ENCODE measurements at regions of chr5 and their contacts with region 1.

Region 1: DNA sequence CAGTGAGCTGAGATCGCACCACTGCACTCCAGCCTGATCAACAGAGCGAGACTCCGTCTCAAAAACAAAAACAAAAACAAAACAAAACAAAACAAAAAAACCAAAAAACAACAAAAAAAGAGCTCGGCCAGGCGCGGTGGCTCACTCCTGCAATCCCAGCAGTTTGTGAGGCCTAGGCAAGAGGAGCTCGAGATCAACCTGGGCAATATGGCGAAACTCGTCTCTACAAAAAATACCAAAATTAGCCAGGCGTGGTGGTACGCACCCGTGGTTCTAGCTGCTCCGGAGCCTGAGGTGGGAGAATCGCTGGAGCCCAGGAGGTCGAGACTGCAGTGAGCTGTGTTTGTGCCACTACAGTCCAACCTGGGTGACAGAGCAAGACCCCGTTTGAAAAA is 20.1 kb downstream of the TRIM7 start:
- H3K4me3 ChIP-seq: no peak overlapping the region
- H3K27ac ChIP-seq: no peak overlapping the region; the same call in 1 of the 2 replicates
- H3K4me1 ChIP-seq: no peaks in the 10 kb centered on the region
- CTCF ChIP-seq: no peak

Region 2: DNA sequence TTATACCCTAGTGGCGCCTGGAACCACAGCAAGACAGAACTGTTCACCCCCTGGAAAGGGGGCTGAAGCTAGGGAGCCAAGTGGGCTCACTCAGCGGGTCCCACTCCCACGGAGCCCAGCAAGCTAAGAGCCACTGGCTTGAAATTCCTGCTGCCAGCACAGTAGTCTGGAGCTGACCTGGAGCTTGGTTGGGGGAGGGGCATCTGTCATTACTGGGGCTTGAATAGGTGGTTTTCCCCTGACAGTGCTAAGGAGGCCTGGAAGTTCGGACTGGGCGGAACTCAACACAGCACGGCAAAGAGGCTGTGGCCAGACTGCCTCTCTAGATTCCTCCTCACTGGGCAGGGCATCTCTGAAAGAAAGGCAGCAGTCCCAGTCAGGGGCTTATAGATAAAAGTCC is 176.7 kb before region 1 on chr5:
- CTCF ChIA-PET with region 1: no interaction called
- POLR2A ChIA-PET with region 1: no interaction called
- H3K4me3 ChIP-seq: no peak overlapping the region
- H3K27ac ChIP-seq: no peak overlapping the region
- H3K4me1 ChIP-seq: no peaks in the 10 kb centered on the region
- CTCF ChIP-seq: no peak

Region 3: GRCh38 chr5:181167814-181168488 is 16.9 kb before region 1 on chr5:
- CTCF ChIA-PET with region 1: interaction called, 27 read pairs
- POLR2A ChIA-PET with region 1: interaction called, 6 read pairs
- H3K4me3 ChIP-seq: no peak overlapping the region
- H3K27ac ChIP-seq: no peak overlapping the region
- H3K4me1 ChIP-seq: peaks cover 6% of the 10 kb centered on the region
- CTCF ChIP-seq: peak; percentile 63

Region 4: GRCh38 chr5:181173420-181174342 is 11.2 kb before region 1 on chr5:
- CTCF ChIA-PET with region 1: interaction called, 27 read pairs
- POLR2A ChIA-PET with region 1: interaction called, 6 read pairs
- H3K4me3 ChIP-seq: peak overlapping the region; percentile 40
- H3K27ac ChIP-seq: peak overlapping the region; percentile 67
- H3K4me1 ChIP-seq: peaks cover 6% of the 10 kb centered on the region; the same call in 1 of the 2 replicates
- CTCF ChIP-seq: peak; percentile 43; the same call in 1 of the 2 replicates

Region 5: DNA sequence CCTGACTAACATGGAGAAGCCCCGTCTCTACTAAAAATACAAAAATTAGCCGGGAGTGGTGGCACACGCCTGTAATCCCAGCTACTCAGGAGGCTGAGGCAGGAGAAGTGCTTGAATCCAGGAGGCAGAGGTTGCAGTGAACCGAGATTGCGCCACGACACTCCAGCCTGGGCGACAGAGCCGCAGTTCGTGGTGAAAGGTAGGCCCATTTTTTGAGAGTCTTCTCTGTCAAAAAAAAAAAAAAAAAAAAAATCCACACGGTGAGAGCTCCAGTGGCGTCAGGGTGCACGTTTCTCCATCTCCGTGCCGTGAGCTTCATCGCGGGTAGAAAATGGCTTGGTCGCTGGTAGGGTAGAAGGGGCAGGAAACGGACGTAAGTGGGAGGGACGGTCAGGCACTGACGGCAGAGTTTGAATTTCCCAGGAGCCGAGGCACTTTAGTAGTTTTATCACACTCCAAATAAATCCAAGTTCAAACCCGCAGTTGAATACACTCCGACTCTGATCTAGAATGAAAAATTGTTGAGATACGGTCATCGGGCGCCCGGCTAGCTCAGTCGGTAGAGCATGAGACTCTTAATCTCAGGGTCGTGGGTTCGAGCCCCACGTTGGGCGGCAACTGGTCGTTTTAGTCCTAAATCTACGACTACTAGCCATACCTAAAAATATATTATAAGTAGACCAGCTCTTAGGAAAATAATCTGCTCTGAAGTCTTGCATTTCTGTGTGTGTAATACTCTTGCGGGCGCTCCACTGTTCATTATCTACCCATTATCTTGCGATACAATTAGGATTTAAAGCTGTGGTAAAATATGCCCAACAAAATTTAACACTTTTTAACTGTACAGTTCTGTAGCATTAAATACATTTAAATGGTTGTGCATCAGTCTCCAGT is 22.6 kb after region 1 on chr5:
- CTCF ChIA-PET with region 1: interaction called, 12 read pairs
- POLR2A ChIA-PET with region 1: interaction called, 86 read pairs
- H3K4me3 ChIP-seq: peak overlapping the region; percentile 61
- H3K27ac ChIP-seq: peak overlapping the region; percentile 35
- H3K4me1 ChIP-seq: no peaks in the 10 kb centered on the region
- CTCF ChIP-seq: peak; percentile 16; the same call in 1 of the 2 replicates

Region 6: DNA sequence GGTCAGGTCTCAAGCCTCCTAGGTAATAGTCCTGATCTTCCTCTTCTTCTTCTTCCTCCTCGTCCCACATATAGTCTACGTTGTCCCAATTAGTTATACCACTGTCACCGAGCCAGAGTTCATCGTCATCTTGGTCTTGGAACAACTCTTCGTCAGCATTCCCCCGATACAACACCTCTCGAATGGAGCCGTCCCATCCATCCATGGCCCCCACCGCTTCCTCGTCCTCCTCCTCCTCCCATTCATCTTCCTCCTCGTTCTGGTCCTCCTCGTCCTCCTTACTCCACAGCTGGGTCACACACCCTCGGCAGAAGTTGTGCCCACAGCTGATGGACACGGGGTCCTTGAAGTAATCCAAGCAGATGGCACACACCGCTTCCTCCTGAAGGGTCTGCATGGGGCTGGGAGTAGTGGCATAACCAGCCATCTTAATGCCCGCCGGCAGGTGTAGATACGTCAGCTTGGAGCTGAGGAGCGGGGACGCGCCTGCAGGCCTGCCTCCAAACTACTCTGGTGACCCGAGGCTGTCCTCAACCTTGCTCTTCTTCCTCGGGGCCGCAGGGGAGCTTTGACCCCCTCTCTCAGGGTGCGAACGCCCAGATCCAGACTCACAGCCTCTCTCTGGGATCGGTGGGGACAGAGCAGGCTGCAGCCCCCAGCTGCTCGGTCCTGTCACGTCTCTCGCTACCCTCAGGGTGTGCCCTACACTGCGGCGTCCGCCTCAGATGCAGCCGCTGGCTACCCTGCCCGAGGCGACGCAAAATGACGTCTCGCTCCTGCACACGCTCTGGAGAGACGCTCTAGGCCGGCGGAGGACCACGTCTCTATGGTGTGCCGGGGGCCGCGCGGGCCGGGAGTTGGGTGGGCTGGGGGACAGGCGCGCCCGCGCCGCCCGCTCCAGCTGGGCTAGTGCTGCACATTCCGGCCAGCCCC is 75.8 kb after region 1 on chr5 and contains the start of gene TRIM52:
- CTCF ChIA-PET with region 1: no interaction called
- POLR2A ChIA-PET with region 1: interaction called, 19 read pairs
- H3K4me3 ChIP-seq: peak within 1 kb of the TSS; percentile 92
- H3K27ac ChIP-seq: peak within 1 kb of the TSS; percentile 89
- H3K4me1 ChIP-seq: no peaks in the 10 kb centered on the region
- CTCF ChIP-seq: peak; percentile 62; the same call in 1 of the 2 replicates